CD4-positive, alpha-beta memory T cell (primary cell): ENCODE measurements at regions of chr1 and their contacts with region 1.

Region 1: GRCh38 chr1:9128520-9129265 is at the start of gene GPR157:
- DNase-seq: peak; percentile 64 to 79 (median 72)
- H3K4me3 ChIP-seq: peak within 1 kb of the TSS; percentile 42 to 72
- H3K4me3 Mint-ChIP-seq: peak within 1 kb of the TSS; percentile 90 to 94 (median 91)
- H3K27ac ChIP-seq: peak within 1 kb of the TSS; percentile 42
- H3K27ac Mint-ChIP-seq: peak within 1 kb of the TSS; percentile 84 to 91 (median 89)
- H3K4me1 ChIP-seq: peaks cover 20% of the 10 kb centered on the region
- H3K4me1 Mint-ChIP-seq: peaks cover 10 to 27% (median 11%) of the 10 kb centered on the region in 4 donors
- H3K27me3 ChIP-seq: no peaks in the 10 kb centered on the region
- H3K27me3 Mint-ChIP-seq: no peaks in the 10 kb centered on the region
- total RNA-seq, gene GPR157: 7.7 to 10.9 TPM

Region 2: DNA sequence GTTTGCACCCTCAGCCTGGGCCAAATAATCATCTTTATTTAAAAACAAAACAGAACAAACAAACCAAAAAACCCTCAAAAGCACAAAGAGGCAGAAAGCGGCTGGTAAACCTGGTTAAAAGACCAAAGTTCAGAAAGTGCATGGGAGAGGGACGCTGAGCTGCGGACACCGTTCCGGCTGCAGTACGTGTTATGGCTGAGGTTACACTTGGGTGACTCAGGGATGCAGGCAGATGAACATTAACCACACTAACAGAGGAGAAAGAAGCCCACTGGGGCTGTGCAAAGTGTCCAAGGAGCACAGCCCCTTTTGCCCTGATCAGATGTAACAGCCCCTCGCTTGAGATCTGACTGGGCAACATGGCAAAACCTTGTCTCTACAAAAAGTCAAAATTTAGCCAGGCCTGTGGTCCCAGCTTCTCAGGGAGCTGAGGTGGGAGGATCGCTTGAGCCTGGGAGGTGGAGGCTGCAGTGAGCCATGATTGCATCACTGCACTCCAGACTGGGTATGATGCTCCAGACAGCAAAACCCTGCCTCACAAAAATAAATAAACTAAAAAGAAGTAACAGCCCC is 28.1 kb before region 1 on chr1:
- CTCF ChIA-PET with region 1: no interaction called
- POLR2A ChIA-PET with region 1: no interaction called
- intact Hi-C with region 1: no loop called
- DNase-seq: no peak
- H3K4me3 ChIP-seq: no peak overlapping the region
- H3K4me3 Mint-ChIP-seq: no peak overlapping the region
- H3K27ac ChIP-seq: no peak overlapping the region
- H3K27ac Mint-ChIP-seq: no peak overlapping the region
- H3K4me1 ChIP-seq: no peaks in the 10 kb centered on the region
- H3K4me1 Mint-ChIP-seq: peaks cover 0 to 4% (median 0%) of the 10 kb centered on the region in 4 donors
- H3K27me3 ChIP-seq: no peaks in the 10 kb centered on the region
- H3K27me3 Mint-ChIP-seq: peaks cover 0 to 4% of the 10 kb centered on the region in 2 donors

Region 3: GRCh38 chr1:9110669-9111356 is 17.9 kb before region 1 on chr1:
- CTCF ChIA-PET with region 1: interaction called, 13 read pairs
- POLR2A ChIA-PET with region 1: interaction called, 3 read pairs
- intact Hi-C with region 1: loop called (anchors 1 kb)
- DNase-seq: peak; percentile 71 to 77 (median 74)
- H3K4me3 ChIP-seq: no peak overlapping the region
- H3K4me3 Mint-ChIP-seq: no peak overlapping the region
- H3K27ac ChIP-seq: no peak overlapping the region
- H3K27ac Mint-ChIP-seq: no peak overlapping the region
- H3K4me1 ChIP-seq: no peaks in the 10 kb centered on the region
- H3K4me1 Mint-ChIP-seq: peaks cover 0 to 4% (median 0%) of the 10 kb centered on the region in 4 donors
- H3K27me3 ChIP-seq: no peaks in the 10 kb centered on the region
- H3K27me3 Mint-ChIP-seq: no peaks in the 10 kb centered on the region

Region 4: GRCh38 chr1:9196129-9197040 is 67.7 kb after region 1 on chr1:
- CTCF ChIA-PET with region 1: no interaction called
- POLR2A ChIA-PET with region 1: no interaction called
- intact Hi-C with region 1: loop called (anchors 1 kb)
- DNase-seq: peak in 4 of 5 donors; percentile 30 to 46 (median 42)
- H3K4me3 ChIP-seq: no peak overlapping the region
- H3K4me3 Mint-ChIP-seq: peak overlapping the region in 1 of 8 donors; percentile 54
- H3K27ac ChIP-seq: no peak overlapping the region
- H3K27ac Mint-ChIP-seq: no peak overlapping the region
- H3K4me1 ChIP-seq: peaks cover 4% of the 10 kb centered on the region
- H3K4me1 Mint-ChIP-seq: peaks cover 8 to 17% (median 11%) of the 10 kb centered on the region in 4 donors
- H3K27me3 ChIP-seq: peaks cover 21% of the 10 kb centered on the region
- H3K27me3 Mint-ChIP-seq: peaks cover 41 to 47% of the 10 kb centered on the region in 2 donors

Region 5: GRCh38 chr1:9292361-9293240 is 163.9 kb after region 1 on chr1 and contains the start of gene SPSB1:
- CTCF ChIA-PET with region 1: no interaction called
- POLR2A ChIA-PET with region 1: no interaction called
- intact Hi-C with region 1: loop called (anchors 5 kb)
- DNase-seq: peak; percentile 46 to 67 (median 56)
- H3K4me3 ChIP-seq: peak within 1 kb of the TSS; percentile 64 to 85
- H3K4me3 Mint-ChIP-seq: peak within 1 kb of the TSS; percentile 68 to 78 (median 75)
- H3K27ac ChIP-seq: peak within 1 kb of the TSS; percentile 27
- H3K27ac Mint-ChIP-seq: peak within 1 kb of the TSS in 5 of 7 donors; percentile 40 to 87 (median 66)
- H3K4me1 ChIP-seq: peaks cover 31% of the 10 kb centered on the region
- H3K4me1 Mint-ChIP-seq: peaks cover 17 to 35% (median 26%) of the 10 kb centered on the region in 4 donors
- H3K27me3 ChIP-seq: no peaks in the 10 kb centered on the region
- H3K27me3 Mint-ChIP-seq: no peaks in the 10 kb centered on the region
- total RNA-seq, gene SPSB1: 3.3 to 4.1 TPM

Region 6: DNA sequence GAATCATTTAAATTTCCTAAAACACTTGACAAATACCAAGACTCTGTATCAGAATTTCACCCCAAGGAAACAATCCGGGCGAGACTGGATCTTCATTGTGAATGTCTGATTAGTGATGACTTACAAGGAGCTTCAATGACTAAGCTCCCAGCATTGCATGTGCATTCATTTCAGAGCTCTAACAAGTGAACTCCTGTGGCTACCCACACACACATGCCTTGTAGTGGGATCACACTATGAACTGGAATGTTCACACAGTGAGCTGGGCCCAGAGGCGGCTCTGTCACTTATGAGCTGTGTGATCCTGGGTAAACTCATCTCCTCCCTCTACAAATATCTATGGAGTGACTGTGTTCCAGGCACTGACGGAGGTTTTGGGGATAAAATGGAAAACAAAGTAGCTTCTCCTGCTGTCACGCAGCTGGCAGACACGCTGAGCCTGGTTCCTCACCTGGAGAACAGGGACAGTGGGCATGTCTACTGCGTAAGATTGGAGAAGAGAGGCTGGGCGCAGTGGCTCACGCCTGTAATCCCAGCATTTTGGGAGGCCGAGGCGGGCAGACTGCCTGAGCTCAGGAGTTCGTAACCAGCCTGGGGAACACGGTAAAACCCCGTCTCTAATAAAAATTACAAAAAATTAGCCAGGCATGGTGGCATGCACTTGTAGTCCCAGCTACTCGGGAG is 638.2 kb after region 1 on chr1:
- CTCF ChIA-PET with region 1: no interaction called
- POLR2A ChIA-PET with region 1: no interaction called
- intact Hi-C with region 1: no loop called
- DNase-seq: no peak
- H3K4me3 ChIP-seq: no peak overlapping the region
- H3K4me3 Mint-ChIP-seq: no peak overlapping the region
- H3K27ac ChIP-seq: no peak overlapping the region
- H3K27ac Mint-ChIP-seq: peak overlapping the region in 2 of 7 donors; percentile 17 to 71
- H3K4me1 ChIP-seq: no peaks in the 10 kb centered on the region
- H3K4me1 Mint-ChIP-seq: peaks cover 11 to 41% (median 22%) of the 10 kb centered on the region in 4 donors
- H3K27me3 ChIP-seq: no peaks in the 10 kb centered on the region
- H3K27me3 Mint-ChIP-seq: no peaks in the 10 kb centered on the region